Posterior vena cava (tissue), 2 donors: ENCODE measurements at regions of chr13 and their contacts with region 1.

Region 1: DNA sequence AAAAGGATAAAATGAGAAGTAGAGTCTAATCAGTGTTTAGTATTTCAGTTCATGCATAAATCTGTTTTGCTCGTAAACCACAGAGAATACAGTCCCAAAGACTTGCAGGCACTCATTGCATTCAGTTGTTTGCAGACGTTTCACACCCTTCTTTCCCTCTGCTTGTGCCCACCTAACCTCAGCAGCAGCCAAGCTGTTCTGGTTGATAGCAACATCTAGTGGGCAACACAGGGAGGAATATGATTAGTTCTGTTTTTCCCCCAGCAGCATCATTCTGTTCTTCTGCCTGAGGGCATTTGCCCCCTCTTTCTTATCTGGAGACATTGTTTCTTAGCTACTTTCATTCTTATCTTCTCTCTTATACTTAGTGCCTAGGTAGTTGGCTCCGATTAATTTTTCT is 135.6 kb downstream of the PAN3 start:
- DNase-seq: no peak

Region 2: GRCh38 chr13:28297341-28297740 is 23.4 kb after region 1 on chr13:
- intact Hi-C with region 1: loop called in 1 of 2 experiments (anchors 2 kb)
- DNase-seq: no peak

Region 3: GRCh38 chr13:29625017-29625416 is 1351.1 kb after region 1 on chr13:
- intact Hi-C with region 1: no loop called
- DNase-seq: no peak